ENCODE measurements at regions of chr18 and their contacts with region 1.

Region 1: DNA sequence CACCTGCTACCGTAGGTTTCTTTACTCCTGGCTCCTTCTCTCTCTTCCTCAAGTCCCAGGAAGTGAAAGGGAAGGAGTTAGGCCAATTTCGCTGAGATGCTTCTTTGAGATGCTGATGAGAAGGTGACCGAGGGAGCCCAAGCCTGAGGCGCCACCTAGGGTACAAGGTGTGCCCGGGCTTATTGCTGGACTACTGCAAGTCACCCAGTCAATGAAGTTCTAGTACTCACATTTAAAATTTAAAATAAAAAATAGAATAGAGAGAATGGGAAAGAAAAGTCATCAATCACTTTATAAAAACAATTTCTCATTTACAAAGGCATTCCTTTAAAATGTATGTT is 45.3 kb downstream of the ACAA2 start:
- DNase-seq: peak in 2 of 5 donors; percentile 30 to 50
- ATAC-seq: peak; percentile 51 to 74 (median 64)
- H3K4me3 ChIP-seq: no peak overlapping the region
- H3K27ac ChIP-seq: no peak overlapping the region
- H3K4me1 ChIP-seq: no peaks in the 10 kb centered on the region
- H3K27me3 ChIP-seq: no peaks in the 10 kb centered on the region
- CTCF ChIP-seq: peak; percentile 20 to 60 (median 45)
- POLR2A ChIP-seq: no peak

Region 2: DNA sequence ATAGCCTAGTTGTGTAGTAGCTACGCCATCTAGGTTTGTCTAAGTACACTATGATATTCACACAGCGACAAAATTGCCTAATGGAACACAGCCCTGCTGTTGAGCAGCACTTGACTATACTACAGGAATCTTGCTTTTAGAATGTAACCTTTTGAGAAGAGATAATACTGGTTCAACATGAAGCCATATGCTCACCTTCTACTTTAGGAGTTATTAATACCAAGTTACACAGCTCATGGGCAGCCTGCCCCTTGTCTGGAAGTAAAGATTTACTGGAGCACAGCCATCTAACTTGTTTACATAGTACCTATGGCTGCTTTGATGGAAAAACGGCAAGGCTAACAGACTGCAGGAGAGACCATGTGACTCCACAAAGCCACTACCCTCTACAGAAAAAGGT is 482.4 kb before region 1 on chr18:
- intact Hi-C with region 1: no loop called
- DNase-seq: peak in 1 of 5 donors; percentile 27
- ATAC-seq: peak; percentile 32 to 95 (median 73)
- H3K4me3 ChIP-seq: no peak overlapping the region
- H3K27ac ChIP-seq: no peak overlapping the region
- H3K4me1 ChIP-seq: peaks cover 0 to 6% (median 0%) of the 10 kb centered on the region in 12 donors
- H3K27me3 ChIP-seq: no peaks in the 10 kb centered on the region
- CTCF ChIP-seq: no peak
- POLR2A ChIP-seq: no peak

Region 3: GRCh38 chr18:49491857-49492693 is 275.9 kb before region 1 on chr18:
- intact Hi-C with region 1: no loop called
- DNase-seq: peak; percentile 82 to 92 (median 92)
- ATAC-seq: peak; percentile 89 to 95 (median 90)
- H3K4me3 ChIP-seq: peak within 1 kb of the TSS; percentile 48 to 92 (median 78)
- H3K27ac ChIP-seq: peak within 1 kb of the TSS; percentile 56 to 95 (median 86)
- H3K4me1 ChIP-seq: peaks cover 3 to 46% (median 19%) of the 10 kb centered on the region in 12 donors
- H3K27me3 ChIP-seq: no peaks in the 10 kb centered on the region
- CTCF ChIP-seq: no peak
- POLR2A ChIP-seq: peak; percentile 82 to 94

Region 4: DNA sequence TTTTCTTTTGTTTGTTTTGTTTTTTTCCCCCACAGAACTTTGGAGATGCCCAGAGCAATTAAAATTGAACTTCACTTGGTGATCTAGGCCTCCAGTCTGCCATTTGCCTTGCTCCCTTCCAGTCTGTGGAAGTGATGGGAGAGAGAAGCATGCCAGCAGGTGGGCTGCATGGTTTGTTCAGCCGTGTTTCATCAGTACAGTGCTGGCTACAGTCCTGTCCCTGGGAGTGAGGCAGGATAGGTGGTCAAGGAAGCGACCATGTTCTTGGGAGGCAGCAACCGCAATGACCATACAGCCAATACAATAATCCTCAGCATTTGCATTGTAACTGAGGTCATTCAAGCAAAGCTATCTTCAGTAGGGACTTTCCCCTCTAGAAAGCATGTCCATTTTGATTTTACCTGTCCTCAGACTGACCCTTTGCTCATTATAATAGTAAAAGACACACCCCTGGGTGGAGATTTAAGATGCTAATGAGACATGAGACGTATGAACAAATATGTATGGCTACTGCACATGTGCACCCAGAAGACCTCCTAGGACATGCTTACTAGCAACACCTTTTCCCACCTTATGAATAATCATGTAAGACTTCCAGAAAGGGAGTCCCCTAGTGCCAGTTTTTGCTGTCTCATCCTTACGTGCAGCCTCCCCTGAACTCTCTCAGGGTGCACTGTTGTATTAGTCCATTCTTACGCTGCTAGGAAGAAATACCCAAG is 217.2 kb before region 1 on chr18:
- intact Hi-C with region 1: loop called in 1 of 10 experiments (anchors 5 kb)
- DNase-seq: no peak
- ATAC-seq: no peak
- H3K4me3 ChIP-seq: no peak overlapping the region
- H3K27ac ChIP-seq: no peak overlapping the region
- H3K4me1 ChIP-seq: no peaks in the 10 kb centered on the region
- H3K27me3 ChIP-seq: peaks cover 0 to 18% (median 0%) of the 10 kb centered on the region in 9 donors
- CTCF ChIP-seq: no peak
- POLR2A ChIP-seq: no peak

Region 5: DNA sequence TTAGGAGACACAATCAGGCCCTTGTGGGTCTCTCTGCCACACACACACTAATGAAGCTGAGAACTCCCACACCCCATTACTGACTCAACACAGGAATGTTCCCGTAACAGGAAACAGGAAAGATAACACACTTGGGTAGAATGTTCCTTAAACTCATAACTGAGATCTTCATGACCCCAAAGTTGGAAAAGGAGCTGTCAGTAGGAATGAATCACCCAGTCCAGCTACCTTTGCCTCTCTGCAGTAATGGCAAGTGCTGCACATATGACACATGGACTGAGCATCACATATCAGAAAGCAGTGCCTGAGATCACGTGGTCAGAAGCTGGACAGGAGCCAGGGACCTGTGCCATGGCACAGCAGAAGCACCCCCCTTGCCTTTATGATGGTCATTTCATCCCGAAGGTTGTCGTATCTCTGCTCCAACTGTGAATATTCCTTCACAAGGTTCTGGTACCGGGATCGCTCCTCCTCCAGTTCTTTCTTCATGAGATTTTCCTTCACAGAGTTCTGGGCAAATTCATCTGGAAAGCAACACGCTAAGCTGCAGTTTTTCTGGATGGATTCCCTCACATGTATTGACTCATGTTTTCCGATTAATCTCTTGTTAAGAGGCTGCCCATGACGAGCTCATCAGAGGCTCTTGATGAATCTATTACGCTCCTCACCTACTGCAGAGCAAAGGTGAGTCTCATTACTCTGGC is 110.7 kb after region 1 on chr18:
- intact Hi-C with region 1: no loop called
- DNase-seq: no peak
- ATAC-seq: no peak
- H3K4me3 ChIP-seq: no peak overlapping the region
- H3K27ac ChIP-seq: no peak overlapping the region
- H3K4me1 ChIP-seq: no peaks in the 10 kb centered on the region
- H3K27me3 ChIP-seq: peaks cover 0 to 8% (median 0%) of the 10 kb centered on the region in 9 donors
- CTCF ChIP-seq: no peak
- POLR2A ChIP-seq: no peak

Region 6: DNA sequence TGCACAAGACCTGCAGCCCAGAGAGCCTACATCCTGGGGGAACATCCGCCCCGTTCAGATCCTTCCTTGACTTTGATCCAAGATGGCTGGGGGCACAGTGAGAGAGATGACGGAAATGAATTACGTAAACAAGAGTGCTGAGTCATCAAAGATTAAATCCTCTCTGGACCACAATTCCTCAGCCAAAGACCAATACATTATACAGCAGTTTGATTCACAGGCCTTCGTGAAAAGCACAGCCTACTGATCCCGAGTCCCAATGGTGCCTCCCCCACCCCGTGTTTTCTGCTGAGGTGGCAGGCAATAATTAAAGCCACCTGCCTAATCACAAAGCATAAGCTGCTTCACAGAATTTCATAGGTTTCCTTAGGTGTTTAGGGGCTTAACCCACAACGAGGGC is 383.9 kb after region 1 on chr18:
- intact Hi-C with region 1: loop called in 1 of 10 experiments (anchors 5 kb)
- DNase-seq: no peak
- ATAC-seq: no peak
- H3K4me3 ChIP-seq: no peak overlapping the region
- H3K27ac ChIP-seq: no peak overlapping the region
- H3K4me1 ChIP-seq: no peaks in the 10 kb centered on the region
- H3K27me3 ChIP-seq: no peaks in the 10 kb centered on the region
- CTCF ChIP-seq: no peak
- POLR2A ChIP-seq: no peak

Measured in heart left ventricle (tissue), 16 donors.